Heart right ventricle (tissue), 16 donors: ENCODE measurements at regions of chr2 and their contacts with region 1.

Region 1: DNA sequence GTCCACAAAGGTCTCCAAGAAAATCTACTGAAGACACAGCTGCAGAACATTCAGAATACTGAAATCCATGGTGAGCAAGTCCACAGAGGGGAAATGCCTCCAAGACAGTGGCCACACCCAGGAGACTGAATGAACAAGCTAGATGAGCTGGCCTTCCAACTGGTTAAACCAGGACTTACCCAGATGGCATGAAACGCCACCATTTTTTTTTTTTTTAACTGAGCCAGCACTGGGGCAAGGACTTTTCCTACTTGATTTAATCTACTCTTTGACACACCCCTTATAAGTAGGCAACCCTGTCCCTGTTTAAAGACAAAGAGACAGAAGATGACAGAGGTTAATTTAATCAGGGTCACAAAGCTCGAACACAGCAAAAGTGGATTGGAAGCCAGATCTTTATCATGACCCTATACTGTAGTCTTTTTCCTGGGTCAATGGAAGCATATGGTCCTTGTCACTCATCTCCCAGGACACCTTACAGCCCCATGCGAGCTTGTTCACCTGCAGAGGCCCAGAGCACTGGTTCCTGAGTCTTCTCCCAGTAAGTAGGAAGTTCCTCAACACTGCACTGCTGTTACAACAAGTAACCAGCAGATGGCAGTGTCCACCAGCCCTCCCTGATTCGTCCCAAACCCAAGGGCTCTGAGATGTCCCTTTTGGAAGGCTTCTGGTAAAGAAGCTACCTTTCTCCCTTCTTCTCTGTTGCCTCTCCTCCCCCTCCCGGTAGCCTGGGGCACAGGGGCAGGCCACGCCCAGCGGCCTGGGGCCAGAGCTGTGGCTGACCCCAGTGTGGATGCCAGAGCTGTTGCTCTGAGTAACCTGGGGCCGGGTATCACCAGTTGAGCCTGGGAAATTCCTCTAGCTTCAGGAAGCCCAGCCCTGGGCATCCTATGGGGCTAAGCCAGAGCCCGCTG is 5.6 kb upstream of the GDF7 start:
- DNase-seq: peak; percentile 50 to 63
- ATAC-seq: peak; percentile 46 to 82 (median 76)
- H3K4me3 ChIP-seq: no peak overlapping the region
- H3K27ac ChIP-seq: no peak overlapping the region
- H3K4me1 ChIP-seq: peaks cover 0 to 15% (median 13%) of the 10 kb centered on the region in 9 donors
- H3K27me3 ChIP-seq: peaks cover 17 to 86% (median 73%) of the 10 kb centered on the region in 7 donors
- CTCF ChIP-seq: peak; percentile 89 to 99 (median 97)

Region 2: GRCh38 chr2:20803226-20803682 is 141.9 kb after region 1 on chr2:
- intact Hi-C with region 1: no loop called
- DNase-seq: no peak
- ATAC-seq: no peak
- H3K4me3 ChIP-seq: no peak overlapping the region
- H3K27ac ChIP-seq: no peak overlapping the region
- H3K4me1 ChIP-seq: no peaks in the 10 kb centered on the region
- H3K27me3 ChIP-seq: no peaks in the 10 kb centered on the region
- CTCF ChIP-seq: no peak

Region 3: GRCh38 chr2:20822535-20823490 is 161.5 kb after region 1 on chr2 and contains the start of gene LDAH:
- intact Hi-C with region 1: loop called in 1 of 10 experiments (anchors 10 kb)
- DNase-seq: peak; percentile 92 to 93
- ATAC-seq: peak; percentile 96 to 99 (median 99)
- H3K4me3 ChIP-seq: peak within 1 kb of the TSS; percentile 63 to 97 (median 84)
- H3K27ac ChIP-seq: peak within 1 kb of the TSS in 9 of 10 donors; percentile 64 to 96 (median 89)
- H3K4me1 ChIP-seq: peaks cover 0 to 12% (median 4%) of the 10 kb centered on the region in 9 donors
- H3K27me3 ChIP-seq: peaks cover 0 to 5% (median 0%) of the 10 kb centered on the region in 7 donors
- CTCF ChIP-seq: no peak
- total RNA-seq, gene LDAH: 4.6 to 11.3 (median 6.3) TPM

Region 4: GRCh38 chr2:20962939-20963557 is 301.7 kb after region 1 on chr2:
- intact Hi-C with region 1: loop called (anchors 1 to 2 kb)
- DNase-seq: peak; percentile 57 to 61
- ATAC-seq: peak; percentile 58 to 80 (median 66)
- H3K4me3 ChIP-seq: no peak overlapping the region
- H3K27ac ChIP-seq: no peak overlapping the region
- H3K4me1 ChIP-seq: no peaks in the 10 kb centered on the region
- H3K27me3 ChIP-seq: peaks cover 0 to 75% (median 40%) of the 10 kb centered on the region in 7 donors
- CTCF ChIP-seq: peak; percentile 75 to 94 (median 88)

Region 5: DNA sequence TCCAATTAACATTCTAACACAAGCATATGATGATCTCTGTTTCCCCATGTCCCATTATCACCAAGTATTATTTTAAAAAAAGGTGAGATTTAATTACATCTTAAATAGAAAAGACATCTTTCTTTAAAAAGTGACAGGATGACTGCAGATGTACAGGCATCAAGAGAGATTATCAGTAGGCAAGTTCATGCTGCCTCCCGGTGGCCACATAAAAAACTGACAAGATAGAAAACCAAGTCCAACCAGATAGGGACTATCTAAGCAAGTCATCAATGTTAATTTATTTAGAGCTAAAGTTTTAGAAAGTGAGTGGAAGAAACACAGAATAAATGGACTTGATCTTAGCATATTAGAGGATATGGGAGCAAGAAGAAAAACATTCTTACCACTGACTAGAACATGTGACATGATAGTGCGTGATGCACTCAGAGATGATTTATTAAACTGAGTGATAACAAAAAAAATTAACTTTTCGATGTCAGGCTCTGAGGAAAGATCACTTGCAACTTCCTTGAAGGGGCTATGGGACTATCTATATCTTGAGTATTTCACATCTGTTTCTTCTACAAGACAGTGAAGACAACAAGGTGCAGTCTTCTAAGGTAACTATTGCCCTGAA is 457.1 kb after region 1 on chr2:
- intact Hi-C with region 1: loop called in 6 of 10 experiments (anchors 5 to 10 kb)
- DNase-seq: peak in 1 of 2 donors; percentile 9
- ATAC-seq: peak in 1 of 8 donors; percentile 62
- H3K4me3 ChIP-seq: no peak overlapping the region
- H3K27ac ChIP-seq: no peak overlapping the region
- H3K4me1 ChIP-seq: no peaks in the 10 kb centered on the region
- H3K27me3 ChIP-seq: peaks cover 0 to 30% (median 4%) of the 10 kb centered on the region in 7 donors
- CTCF ChIP-seq: peak; percentile 10 to 63 (median 54)